Sigmoid colon (tissue), 7 donors: ENCODE measurements at regions of chr1 and their contacts with region 1.

Region 1: DNA sequence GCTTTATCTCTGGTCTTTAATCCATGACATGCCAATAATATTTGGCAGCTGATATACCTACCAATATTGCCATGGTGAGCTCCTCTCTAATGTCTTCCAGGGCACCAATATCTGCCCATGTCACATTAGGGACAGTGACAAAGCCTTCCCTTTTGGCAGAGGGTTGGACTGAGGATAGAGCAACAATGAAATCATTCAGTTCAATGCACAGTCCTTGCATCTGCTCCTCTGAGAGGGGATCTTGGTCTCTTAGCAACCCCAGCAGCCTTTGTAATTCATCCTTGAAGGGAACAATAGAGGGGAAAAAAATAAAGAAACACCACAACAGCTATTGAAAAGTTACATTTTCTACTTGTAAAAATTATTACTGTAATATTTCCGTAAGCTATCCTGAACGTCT is 42.3 kb downstream of the NVL start:
- DNase-seq: no peak
- H3K4me3 ChIP-seq: no peak overlapping the region
- H3K27ac ChIP-seq: no peak overlapping the region
- H3K4me1 ChIP-seq: no peaks in the 10 kb centered on the region
- H3K27me3 ChIP-seq: no peaks in the 10 kb centered on the region
- CTCF ChIP-seq: no peak
- EP300 ChIP-seq: no peak
- POLR2A ChIP-seq: no peak

Region 2: GRCh38 chr1:224392411-224393249 is 104.9 kb after region 1 on chr1:
- intact Hi-C with region 1: loop called (anchors 10 kb)
- DNase-seq: no peak
- H3K4me3 ChIP-seq: no peak overlapping the region
- H3K27ac ChIP-seq: no peak overlapping the region
- H3K4me1 ChIP-seq: no peaks in the 10 kb centered on the region
- H3K27me3 ChIP-seq: no peaks in the 10 kb centered on the region
- CTCF ChIP-seq: no peak
- EP300 ChIP-seq: no peak
- POLR2A ChIP-seq: no peak

Region 3: DNA sequence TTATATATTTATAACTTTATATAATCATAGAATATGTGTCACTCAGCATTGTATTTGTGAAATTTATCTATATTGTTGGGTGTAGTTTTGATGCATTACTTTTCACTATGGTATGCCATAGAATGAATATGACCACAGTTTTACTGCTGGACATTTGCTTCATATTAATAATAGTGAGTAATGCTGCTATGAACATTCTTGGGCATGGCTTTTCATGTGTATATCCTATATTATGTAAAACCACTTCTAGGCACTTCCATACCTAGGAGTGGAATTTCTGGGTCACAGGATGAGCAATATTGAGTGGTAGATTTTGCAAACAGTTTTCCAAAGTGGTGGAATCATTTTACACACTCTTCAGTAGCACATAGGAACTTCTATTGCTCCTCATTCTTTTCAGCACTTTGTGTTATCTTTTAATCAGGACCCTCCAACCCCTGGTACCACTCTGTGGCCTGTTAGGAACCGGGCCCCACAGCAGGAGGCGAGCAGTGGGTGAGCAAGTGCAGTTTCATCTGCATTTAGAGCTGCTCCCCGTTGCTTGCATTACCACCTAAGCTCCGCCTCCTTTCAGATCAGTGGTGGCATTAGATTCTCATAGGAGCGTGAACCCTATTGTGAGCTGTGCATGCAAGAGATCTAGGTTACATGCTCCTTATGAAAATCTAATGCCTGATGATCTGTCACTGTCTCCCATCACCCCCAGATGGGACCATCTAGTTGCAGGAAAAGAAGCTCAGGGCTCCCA is 272.4 kb after region 1 on chr1:
- intact Hi-C with region 1: no loop called
- DNase-seq: no peak
- H3K4me3 ChIP-seq: no peak overlapping the region
- H3K27ac ChIP-seq: no peak overlapping the region
- H3K4me1 ChIP-seq: no peaks in the 10 kb centered on the region
- H3K27me3 ChIP-seq: no peaks in the 10 kb centered on the region
- CTCF ChIP-seq: no peak
- EP300 ChIP-seq: no peak
- POLR2A ChIP-seq: no peak